ENCODE measurements at regions of chr6 and their contacts with region 1.

Region 1: DNA sequence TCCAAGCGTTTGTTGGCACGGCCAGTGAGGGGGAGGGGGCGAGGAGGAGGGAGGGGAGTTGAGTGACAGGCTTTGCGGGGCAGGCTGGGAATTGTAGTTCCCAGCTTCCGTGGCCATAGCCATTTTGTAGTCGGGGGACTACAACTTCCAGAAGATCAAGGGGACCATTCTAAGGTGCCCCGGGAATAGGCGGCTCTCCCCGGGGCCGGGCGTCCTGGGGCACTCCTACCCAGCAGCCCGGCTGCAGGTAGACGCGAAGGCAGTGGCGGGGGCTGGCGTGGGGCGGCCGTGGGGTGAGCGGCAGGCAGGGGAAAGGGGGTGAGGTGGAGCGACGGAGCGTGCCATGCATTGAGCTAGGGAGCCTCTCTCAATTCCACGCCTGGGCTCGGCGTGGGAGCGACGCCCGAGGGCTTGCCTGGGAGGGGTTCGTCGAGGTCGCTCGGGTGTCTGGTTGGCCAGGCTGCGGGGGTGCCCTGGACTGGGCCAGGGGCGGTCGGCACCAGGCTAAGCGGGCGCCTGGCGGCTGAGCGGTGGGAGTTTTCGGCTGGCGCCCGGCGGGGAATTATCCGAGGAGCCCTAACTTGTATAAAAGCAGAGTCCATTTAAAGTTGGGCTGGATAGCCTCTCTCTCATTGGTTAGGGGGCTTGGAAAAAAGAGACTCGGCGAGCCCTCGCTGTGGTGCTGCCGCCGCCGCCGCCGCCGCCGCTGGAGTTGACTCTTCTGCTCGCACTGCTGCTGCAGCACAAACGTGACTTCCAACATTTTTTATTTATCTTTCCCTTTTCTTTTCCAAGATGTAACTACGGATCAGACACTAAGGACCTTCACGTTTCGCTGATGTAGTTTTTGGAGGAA is at the start of gene JARID2:
- DNase-seq: peak; percentile 99
- ATAC-seq: peak; percentile 60
- H3K4me3 Mint-ChIP-seq: peak within 1 kb of the TSS; percentile 92
- H3K27ac Mint-ChIP-seq: peak within 1 kb of the TSS; percentile 99
- H3K4me1 Mint-ChIP-seq: peaks cover 22% of the 10 kb centered on the region
- H3K27me3 Mint-ChIP-seq: no peaks in the 10 kb centered on the region
- total RNA-seq, gene JARID2: 43.0 to 48.6 TPM

Region 2: DNA sequence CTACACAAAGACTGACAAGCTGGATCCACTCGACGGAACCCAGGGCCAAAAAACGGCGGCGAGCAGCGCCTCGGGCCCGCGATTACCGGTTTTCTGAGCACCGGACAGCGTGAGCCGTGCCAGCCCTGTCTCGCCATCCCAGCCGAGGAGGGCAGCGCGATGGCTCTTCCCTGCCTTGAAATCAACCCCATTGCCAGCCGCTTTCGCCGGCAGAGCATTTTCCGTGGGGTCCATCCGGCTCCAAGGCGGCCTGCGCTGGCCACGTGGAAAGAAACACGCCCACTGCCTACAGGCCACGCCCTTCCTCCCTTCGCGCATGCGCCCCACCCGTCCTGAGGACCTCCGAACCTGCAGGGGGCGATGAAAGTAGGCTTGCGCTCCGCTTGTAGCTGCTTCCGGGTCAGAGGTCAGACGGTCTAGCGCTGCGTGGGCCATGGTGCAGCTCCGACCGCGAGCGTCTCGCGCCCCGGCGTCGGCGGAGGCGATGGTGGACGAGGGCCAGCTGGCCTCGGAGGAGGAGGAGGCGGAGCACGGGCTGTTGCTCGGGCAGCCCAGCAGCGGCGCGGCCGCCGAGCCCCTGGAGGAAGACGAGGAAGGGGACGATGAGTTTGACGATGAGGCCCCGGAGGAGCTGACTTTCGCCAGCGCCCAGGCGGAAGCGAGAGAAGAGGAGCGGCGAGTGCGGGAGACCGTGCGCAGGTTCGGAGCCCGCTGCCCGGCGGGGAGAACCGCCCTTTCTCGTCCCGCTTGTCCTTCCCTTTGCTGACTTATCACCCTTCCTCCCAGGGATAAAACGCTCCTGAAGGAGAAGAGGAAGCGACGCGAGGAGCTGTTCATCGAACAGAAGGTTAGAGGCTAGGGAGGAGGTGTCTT is 1630.4 kb before region 1 on chr6 and contains the start of gene NOL7:
- CTCF ChIA-PET with region 1: no interaction called
- POLR2A ChIA-PET with region 1: no interaction called
- intact Hi-C with region 1: loop called in 1 of 2 experiments (anchors 5 kb)
- DNase-seq: peak; percentile 99
- ATAC-seq: peak; percentile 92
- H3K4me3 Mint-ChIP-seq: peak within 1 kb of the TSS; percentile 92
- H3K27ac Mint-ChIP-seq: peak within 1 kb of the TSS; percentile 90
- H3K4me1 Mint-ChIP-seq: peaks cover 44% of the 10 kb centered on the region
- H3K27me3 Mint-ChIP-seq: no peaks in the 10 kb centered on the region
- total RNA-seq, gene NOL7: 92.8 to 97.3 TPM

Region 3: GRCh38 chr6:14423330-14423729 is 822.3 kb before region 1 on chr6:
- CTCF ChIA-PET with region 1: no interaction called
- POLR2A ChIA-PET with region 1: no interaction called
- intact Hi-C with region 1: loop called in 1 of 2 experiments (anchors 10 kb)
- DNase-seq: no peak
- ATAC-seq: no peak
- H3K4me3 Mint-ChIP-seq: no peak overlapping the region
- H3K27ac Mint-ChIP-seq: peak overlapping the region; percentile 96
- H3K4me1 Mint-ChIP-seq: peaks cover 54% of the 10 kb centered on the region
- H3K27me3 Mint-ChIP-seq: no peaks in the 10 kb centered on the region

Region 4: GRCh38 chr6:14734416-14735340 is 510.9 kb before region 1 on chr6:
- CTCF ChIA-PET with region 1: no interaction called
- POLR2A ChIA-PET with region 1: interaction called, 6 read pairs
- intact Hi-C with region 1: loop called in 1 of 2 experiments (anchors 1 kb)
- DNase-seq: peak; percentile 55
- ATAC-seq: peak; percentile 37
- H3K4me3 Mint-ChIP-seq: peak overlapping the region; percentile 67
- H3K27ac Mint-ChIP-seq: peak overlapping the region; percentile 100
- H3K4me1 Mint-ChIP-seq: peaks cover 99% of the 10 kb centered on the region
- H3K27me3 Mint-ChIP-seq: no peaks in the 10 kb centered on the region

Region 5: GRCh38 chr6:14876778-14877613 is 368.6 kb before region 1 on chr6:
- CTCF ChIA-PET with region 1: no interaction called
- POLR2A ChIA-PET with region 1: interaction called, 3 read pairs
- intact Hi-C with region 1: loop called (anchors 1 kb)
- DNase-seq: peak; percentile 52
- ATAC-seq: peak; percentile 74
- H3K4me3 Mint-ChIP-seq: peak overlapping the region; percentile 47
- H3K27ac Mint-ChIP-seq: peak overlapping the region; percentile 99
- H3K4me1 Mint-ChIP-seq: peaks cover 78% of the 10 kb centered on the region
- H3K27me3 Mint-ChIP-seq: no peaks in the 10 kb centered on the region

Region 6: GRCh38 chr6:15389765-15390723 is 144.5 kb after region 1 on chr6:
- CTCF ChIA-PET with region 1: no interaction called
- POLR2A ChIA-PET with region 1: interaction called, 3 read pairs
- intact Hi-C with region 1: loop called in 1 of 2 experiments (anchors 1 kb)
- DNase-seq: no peak
- ATAC-seq: no peak
- H3K4me3 Mint-ChIP-seq: no peak overlapping the region
- H3K27ac Mint-ChIP-seq: peak overlapping the region; percentile 63
- H3K4me1 Mint-ChIP-seq: peaks cover 81% of the 10 kb centered on the region
- H3K27me3 Mint-ChIP-seq: no peaks in the 10 kb centered on the region

Region 7: GRCh38 chr6:15628499-15629131 is 383.0 kb after region 1 on chr6:
- CTCF ChIA-PET with region 1: no interaction called
- POLR2A ChIA-PET with region 1: no interaction called
- intact Hi-C with region 1: loop called (anchors 5 kb)
- DNase-seq: peak; percentile 80
- ATAC-seq: peak; percentile 96
- H3K4me3 Mint-ChIP-seq: no peak overlapping the region
- H3K27ac Mint-ChIP-seq: no peak overlapping the region
- H3K4me1 Mint-ChIP-seq: peaks cover 52% of the 10 kb centered on the region
- H3K27me3 Mint-ChIP-seq: peaks cover 8% of the 10 kb centered on the region